MCF 10A (cell line): ENCODE measurements at regions of chr13 and their contacts with region 1.

Region 1: DNA sequence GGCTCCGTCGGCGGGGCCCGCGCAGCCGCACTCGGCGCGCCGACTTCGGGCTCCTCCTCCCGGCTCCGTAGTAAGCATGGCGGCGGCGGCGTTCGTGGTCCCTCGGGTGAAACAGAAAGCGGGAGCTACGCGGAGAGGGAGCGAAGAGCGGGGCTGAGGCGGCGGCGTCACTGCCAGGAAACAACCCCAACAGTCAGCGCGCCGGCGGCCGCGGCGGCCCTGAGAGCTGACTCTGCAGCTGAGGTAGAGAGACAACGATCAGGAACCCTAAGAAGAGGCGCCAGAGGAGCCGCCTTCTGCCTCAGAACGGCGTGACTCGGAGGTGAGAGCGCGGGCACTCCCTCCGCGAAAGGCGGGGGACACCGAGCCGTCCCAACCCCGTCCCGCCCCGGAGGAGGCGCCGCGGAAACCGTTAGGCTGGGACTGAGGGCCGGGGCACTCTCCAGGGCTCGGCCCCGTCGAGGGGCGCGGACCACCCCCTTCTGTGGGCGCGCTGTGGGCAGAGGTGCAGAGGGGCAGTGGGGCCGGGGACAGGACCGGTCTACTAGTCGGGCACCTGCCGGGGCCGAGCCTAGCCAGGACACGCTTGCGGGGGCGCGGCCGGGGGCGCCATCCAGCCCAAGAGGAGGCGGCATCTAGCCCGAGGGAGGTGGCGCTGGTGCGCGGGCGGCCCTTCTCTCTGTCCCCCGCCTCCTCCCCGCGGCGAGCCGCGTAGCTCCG is at the start of gene FNDC3A:
- DNase-seq: peak; percentile 83
- H3K4me3 Mint-ChIP-seq: peak within 1 kb of the TSS; percentile 90
- H3K27ac Mint-ChIP-seq: peak within 1 kb of the TSS; percentile 97
- H3K4me1 Mint-ChIP-seq: peaks cover 25% of the 10 kb centered on the region
- H3K27me3 Mint-ChIP-seq: no peaks in the 10 kb centered on the region
- CTCF ChIP-seq: no peak
- total RNA-seq, gene FNDC3A: 61.4 and 63.0 TPM in 2 replicates

Region 2: DNA sequence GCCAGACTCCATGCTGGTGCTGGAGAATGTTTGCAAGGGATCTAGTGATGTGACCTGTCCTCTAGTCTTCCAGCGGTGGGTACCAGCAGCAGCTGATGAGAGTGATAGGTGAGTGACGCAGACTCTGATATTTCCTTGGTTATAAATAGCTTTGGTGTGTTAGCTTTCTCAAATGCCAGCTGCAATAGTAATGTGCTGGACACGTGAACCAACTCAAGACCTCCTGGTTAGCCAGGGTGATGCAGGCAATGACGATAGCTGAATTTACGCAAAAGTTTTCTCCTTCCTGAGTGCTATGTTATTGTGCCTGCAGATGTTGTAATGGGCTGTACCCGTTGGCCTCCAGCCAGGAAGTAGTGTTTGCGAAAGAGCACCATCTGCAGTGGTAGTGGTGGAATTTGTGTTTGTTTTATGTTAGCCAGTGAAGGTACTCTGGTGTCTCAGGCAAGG is 192.8 kb before region 1 on chr13:
- CTCF ChIA-PET with region 1: interaction called, 3 read pairs
- POLR2A ChIA-PET with region 1: interaction called, 7 read pairs
- intact Hi-C with region 1: loop called (anchors 1 kb)
- DNase-seq: peak; percentile 99
- H3K4me3 Mint-ChIP-seq: peak overlapping the region; percentile 35
- H3K27ac Mint-ChIP-seq: peak overlapping the region; percentile 88
- H3K4me1 Mint-ChIP-seq: peaks cover 24% of the 10 kb centered on the region
- H3K27me3 Mint-ChIP-seq: no peaks in the 10 kb centered on the region
- CTCF ChIP-seq: no peak

Region 3: DNA sequence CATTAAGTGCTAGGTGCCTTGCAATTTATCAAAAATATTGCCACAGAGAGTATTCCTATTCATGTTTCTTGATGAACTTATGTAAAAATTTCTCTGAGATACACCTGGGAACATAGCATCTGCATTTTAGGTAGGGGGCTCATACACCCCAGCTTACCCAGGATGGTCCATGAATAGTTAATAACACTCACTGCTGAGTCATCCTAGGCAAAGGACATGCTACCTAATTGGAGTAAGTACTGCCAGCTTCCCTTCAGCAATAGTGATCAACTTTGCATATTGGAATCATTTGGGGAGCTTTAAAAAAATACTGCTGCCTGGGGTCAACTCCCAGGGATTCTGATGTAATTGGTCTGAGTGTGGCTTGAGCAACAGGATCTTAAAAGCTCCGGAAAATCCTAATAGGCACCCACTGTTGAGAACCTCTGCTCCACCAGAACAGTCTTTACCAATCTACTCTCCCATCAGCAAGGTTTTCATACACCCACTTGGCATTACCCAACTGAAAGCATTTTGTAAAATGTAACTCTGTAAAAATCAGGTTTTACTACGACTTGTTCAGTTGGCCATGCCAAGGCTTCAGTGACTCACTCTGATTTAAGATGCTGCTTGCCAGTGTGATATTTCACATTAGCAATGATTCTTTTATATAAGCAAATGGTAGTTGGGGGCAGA is 67.5 kb before region 1 on chr13:
- CTCF ChIA-PET with region 1: interaction called, 3 read pairs
- POLR2A ChIA-PET with region 1: interaction called, 10 read pairs
- intact Hi-C with region 1: no loop called
- DNase-seq: peak; percentile 75
- H3K4me3 Mint-ChIP-seq: no peak overlapping the region
- H3K27ac Mint-ChIP-seq: no peak overlapping the region
- H3K4me1 Mint-ChIP-seq: peaks cover 10% of the 10 kb centered on the region
- H3K27me3 Mint-ChIP-seq: no peaks in the 10 kb centered on the region
- CTCF ChIP-seq: no peak

Region 4: DNA sequence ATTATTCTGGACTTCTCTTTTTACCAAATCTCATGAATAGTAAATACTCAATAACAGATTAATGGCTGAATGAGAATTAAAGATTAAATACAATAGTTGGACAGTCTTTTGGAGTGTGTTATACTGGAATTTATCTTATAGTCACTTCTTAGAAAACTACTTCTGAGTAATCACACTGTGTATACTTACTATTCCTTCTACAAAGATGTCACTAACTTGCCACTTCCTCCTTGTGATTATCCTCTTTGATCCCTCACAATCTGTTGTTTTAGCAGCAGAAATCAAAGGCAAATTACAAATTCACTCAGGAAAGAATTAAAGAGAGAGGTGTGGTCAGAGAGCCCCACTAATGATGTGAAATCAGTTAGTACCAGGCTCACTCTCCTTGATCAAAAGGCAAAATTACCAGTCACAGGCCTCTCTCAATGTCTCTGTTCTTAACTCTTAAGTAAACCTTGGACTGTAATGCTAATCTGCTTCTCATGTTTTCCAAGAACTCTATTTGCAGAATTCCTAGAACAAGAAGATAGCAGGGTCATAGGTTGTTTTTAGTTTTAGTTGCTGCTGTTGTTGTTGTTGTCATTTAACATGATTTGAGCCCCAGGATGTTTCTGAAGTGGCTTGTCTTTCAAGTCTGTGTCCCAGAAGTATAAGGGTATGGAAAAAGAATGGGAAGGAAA is 37.6 kb before region 1 on chr13:
- CTCF ChIA-PET with region 1: no interaction called
- POLR2A ChIA-PET with region 1: no interaction called
- intact Hi-C with region 1: no loop called
- DNase-seq: no peak
- H3K4me3 Mint-ChIP-seq: no peak overlapping the region
- H3K27ac Mint-ChIP-seq: no peak overlapping the region
- H3K4me1 Mint-ChIP-seq: peaks cover 9% of the 10 kb centered on the region
- H3K27me3 Mint-ChIP-seq: no peaks in the 10 kb centered on the region
- CTCF ChIP-seq: no peak

Region 5: GRCh38 chr13:49023446-49023845 is 47.4 kb after region 1 on chr13:
- CTCF ChIA-PET with region 1: no interaction called
- POLR2A ChIA-PET with region 1: interaction called, 27 read pairs
- intact Hi-C with region 1: no loop called
- DNase-seq: peak; percentile 58
- H3K4me3 Mint-ChIP-seq: no peak overlapping the region
- H3K27ac Mint-ChIP-seq: peak overlapping the region; percentile 63
- H3K4me1 Mint-ChIP-seq: peaks cover 31% of the 10 kb centered on the region
- H3K27me3 Mint-ChIP-seq: no peaks in the 10 kb centered on the region
- CTCF ChIP-seq: no peak

Region 6: DNA sequence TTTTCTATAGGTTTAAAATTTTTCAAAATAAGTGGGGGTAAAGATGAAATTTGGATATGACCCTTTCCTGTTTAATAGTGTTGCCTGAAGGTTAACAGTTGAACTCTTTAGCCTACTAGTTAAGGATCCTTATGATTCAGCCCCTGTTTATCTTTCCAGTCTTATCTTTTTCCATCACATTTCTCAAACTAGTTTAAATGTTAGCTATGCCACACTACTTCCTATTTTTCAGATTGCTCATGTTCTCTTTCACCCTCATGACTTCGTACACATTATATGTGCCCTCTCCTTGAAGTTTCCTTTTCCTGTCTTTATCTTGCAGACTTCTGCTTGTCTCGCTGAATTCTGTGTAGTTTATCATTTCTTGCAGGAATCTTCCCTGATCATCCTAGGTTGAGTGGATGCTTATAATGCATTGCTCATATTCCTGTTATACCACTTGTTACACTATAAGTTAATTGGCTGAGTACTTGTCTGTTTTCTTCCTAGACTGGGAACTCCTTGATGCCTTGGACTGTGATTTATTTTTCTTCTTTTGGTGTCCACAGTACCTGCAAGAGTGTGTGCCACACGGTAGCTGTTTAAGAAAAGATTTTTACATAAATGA is 86.4 kb after region 1 on chr13:
- CTCF ChIA-PET with region 1: interaction called, 7 read pairs
- POLR2A ChIA-PET with region 1: interaction called, 18 read pairs
- intact Hi-C with region 1: no loop called
- DNase-seq: no peak
- H3K4me3 Mint-ChIP-seq: no peak overlapping the region
- H3K27ac Mint-ChIP-seq: peak overlapping the region; percentile 55
- H3K4me1 Mint-ChIP-seq: peaks cover 32% of the 10 kb centered on the region
- H3K27me3 Mint-ChIP-seq: no peaks in the 10 kb centered on the region
- CTCF ChIP-seq: no peak

Region 7: DNA sequence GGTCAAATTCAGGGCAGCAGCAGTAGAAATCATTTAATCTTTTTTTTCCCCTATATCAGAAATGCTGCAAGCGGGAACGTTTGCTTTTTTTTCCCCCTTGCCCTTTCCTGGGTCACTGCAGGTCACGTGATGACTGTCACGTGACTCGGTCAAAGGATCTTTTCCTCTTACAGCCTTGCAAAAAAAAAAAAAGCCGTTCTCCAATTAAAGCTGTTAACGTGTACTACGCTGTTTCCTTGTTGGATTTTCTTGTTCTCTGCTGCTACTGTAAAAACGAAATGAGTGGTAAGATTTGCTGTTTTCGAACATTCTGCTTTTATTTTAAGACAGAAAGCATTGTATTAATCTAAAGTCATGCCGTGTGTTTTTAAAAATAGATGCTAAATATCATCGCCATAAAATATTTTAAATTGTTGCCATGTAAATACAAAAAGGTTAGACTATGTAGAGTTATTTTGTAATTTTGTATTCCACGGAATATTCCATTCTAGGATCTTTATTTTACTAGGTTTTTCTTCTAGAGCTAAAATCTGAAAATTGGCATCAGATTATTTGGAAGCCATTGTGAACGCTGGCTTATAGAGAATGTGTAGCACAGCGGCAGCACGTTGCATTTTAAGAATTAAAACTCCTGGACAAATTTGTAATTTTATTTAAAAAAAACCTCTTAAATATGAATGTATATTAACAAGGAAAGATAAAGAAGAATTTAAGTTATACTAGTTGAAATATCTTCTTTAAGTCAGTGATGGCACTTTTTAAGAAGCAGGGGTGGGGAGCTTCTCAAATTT is 134.3 kb after region 1 on chr13:
- CTCF ChIA-PET with region 1: interaction called, 3 read pairs
- POLR2A ChIA-PET with region 1: interaction called, 94 read pairs
- intact Hi-C with region 1: loop called (anchors 1 kb)
- DNase-seq: peak; percentile 93
- H3K4me3 Mint-ChIP-seq: peak overlapping the region; percentile 79
- H3K27ac Mint-ChIP-seq: peak overlapping the region; percentile 70
- H3K4me1 Mint-ChIP-seq: peaks cover 17% of the 10 kb centered on the region
- H3K27me3 Mint-ChIP-seq: no peaks in the 10 kb centered on the region
- CTCF ChIP-seq: no peak

Region 8: DNA sequence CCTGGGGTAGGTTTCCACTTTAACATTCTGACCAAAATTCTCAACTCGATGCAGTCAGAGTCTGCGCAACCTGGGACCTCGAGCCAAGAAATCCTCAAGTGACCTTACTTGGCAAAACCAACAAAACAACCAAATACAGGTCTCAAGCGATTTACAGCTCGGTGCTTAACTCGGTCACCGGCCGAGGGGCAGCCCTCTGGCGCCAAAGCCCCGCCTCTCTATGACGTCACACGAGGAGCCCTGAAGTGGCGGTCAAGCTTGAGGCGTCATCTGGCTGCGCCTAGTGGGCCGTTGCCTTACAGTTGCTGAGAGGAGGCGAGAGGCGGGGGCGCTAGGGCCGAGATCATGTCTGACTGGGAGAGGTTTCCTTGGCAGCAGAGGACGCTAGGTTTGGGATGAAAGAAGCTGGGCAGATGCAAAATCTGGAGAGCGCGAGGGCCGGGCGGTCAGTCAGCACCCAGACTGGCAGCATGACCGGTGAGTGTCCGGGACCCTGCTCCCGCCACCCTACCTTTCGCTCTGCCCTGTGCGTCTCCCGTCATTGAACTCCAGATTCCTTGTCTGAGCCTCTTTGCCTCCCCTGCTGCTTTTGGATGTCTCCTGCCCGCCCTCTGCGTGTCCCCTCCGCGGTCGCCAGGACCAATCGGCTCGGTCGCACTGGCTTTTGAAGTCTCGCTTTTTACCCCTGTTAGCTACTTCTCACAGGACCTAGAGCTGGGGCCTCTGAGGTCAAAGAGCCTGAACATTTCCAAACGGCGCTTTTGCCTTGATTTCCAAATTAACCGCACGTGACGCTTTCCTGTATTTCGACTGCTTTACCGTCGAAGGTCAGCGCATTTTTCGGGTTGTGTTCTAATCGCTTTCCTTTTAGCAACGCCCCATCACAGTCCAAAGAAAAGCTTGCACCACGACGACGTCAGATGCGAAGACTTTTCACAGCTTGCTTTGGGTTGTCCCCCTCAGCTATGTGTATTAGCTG is 271.9 kb after region 1 on chr13 and contains the start of gene CDADC1:
- CTCF ChIA-PET with region 1: interaction called, 3 read pairs
- POLR2A ChIA-PET with region 1: interaction called, 21 read pairs
- intact Hi-C with region 1: no loop called
- DNase-seq: peak; percentile 95
- H3K4me3 Mint-ChIP-seq: peak within 1 kb of the TSS; percentile 96
- H3K27ac Mint-ChIP-seq: peak within 1 kb of the TSS; percentile 97
- H3K4me1 Mint-ChIP-seq: peaks cover 6% of the 10 kb centered on the region
- H3K27me3 Mint-ChIP-seq: no peaks in the 10 kb centered on the region
- CTCF ChIP-seq: no peak
- total RNA-seq, gene CDADC1: 8.0 and 9.4 TPM in 2 replicates